ENCODE measurements at regions of chr7 and their contacts with region 1.

Region 1: GRCh38 chr7:47008461-47008860 is 573.5 kb downstream of the TNS3 start:
- DNase-seq: no peak
- ATAC-seq: no peak
- H3K4me3 ChIP-seq: no peak overlapping the region
- H3K27ac ChIP-seq: no peak overlapping the region
- H3K4me1 ChIP-seq: no peaks in the 10 kb centered on the region
- H3K27me3 ChIP-seq: no peaks in the 10 kb centered on the region
- CTCF ChIP-seq: no peak

Region 2: GRCh38 chr7:46955531-46955930 is 52.9 kb before region 1 on chr7:
- intact Hi-C with region 1: loop called in 1 of 10 experiments (anchors 10 kb)
- DNase-seq: no peak
- ATAC-seq: no peak
- H3K4me3 ChIP-seq: no peak overlapping the region
- H3K27ac ChIP-seq: no peak overlapping the region
- H3K4me1 ChIP-seq: peaks cover 0 to 10% (median 0%) of the 10 kb centered on the region in 9 donors
- H3K27me3 ChIP-seq: no peaks in the 10 kb centered on the region
- CTCF ChIP-seq: no peak

Region 3: DNA sequence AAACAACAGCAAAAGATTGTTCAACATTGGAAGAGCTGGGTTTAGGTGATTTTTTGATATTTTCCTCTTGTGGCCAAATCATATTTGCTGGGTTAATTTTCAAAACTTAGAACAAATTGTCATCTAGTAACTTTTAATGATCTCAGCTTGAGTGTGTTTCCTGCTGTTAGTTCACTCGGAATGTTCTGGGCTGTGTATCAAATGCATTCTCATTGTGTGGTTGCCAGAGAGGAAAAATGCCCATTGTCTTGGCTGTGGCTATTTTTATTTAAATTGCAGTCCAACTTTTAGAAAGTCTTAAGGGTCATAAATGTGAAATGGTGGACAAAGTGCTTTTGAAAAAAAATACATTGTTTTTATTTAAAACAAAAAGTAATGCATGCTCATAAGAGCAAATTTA is 31.4 kb after region 1 on chr7:
- intact Hi-C with region 1: no loop called
- DNase-seq: peak in 1 of 2 donors; percentile 69
- ATAC-seq: peak; percentile 74 to 92 (median 87)
- H3K4me3 ChIP-seq: no peak overlapping the region
- H3K27ac ChIP-seq: peak overlapping the region; percentile 45 to 88 (median 78)
- H3K4me1 ChIP-seq: peaks cover 17 to 77% (median 49%) of the 10 kb centered on the region in 9 donors
- H3K27me3 ChIP-seq: no peaks in the 10 kb centered on the region
- CTCF ChIP-seq: no peak

Region 4: DNA sequence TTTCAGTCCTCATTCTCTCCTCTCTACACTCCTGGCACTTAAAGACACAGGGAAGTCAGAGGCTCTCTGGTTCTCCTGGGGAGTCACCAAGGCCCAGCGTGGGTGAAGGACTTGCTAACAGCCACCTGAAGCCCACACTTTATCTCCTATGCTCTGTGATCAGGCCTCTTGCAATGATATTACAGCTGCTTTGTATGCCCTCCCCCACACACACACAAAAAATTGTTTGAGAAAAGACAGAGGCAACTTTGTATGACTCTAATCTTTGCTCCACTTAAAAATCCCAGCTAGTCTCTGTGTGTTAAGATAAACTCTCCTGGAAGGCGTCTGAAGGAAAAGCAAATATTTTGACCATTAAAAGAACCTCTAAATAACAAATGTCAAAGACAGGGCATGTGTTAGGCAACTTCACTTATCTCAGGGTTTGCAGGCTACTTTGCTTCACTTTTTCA is 66.3 kb after region 1 on chr7:
- intact Hi-C with region 1: loop called in 1 of 10 experiments (anchors 10 kb)
- DNase-seq: no peak
- ATAC-seq: peak; percentile 41 to 84 (median 68)
- H3K4me3 ChIP-seq: no peak overlapping the region
- H3K27ac ChIP-seq: peak overlapping the region in 1 of 10 donors; percentile 29
- H3K4me1 ChIP-seq: peaks cover 0 to 31% (median 13%) of the 10 kb centered on the region in 9 donors
- H3K27me3 ChIP-seq: no peaks in the 10 kb centered on the region
- CTCF ChIP-seq: no peak

Measured in heart right ventricle (tissue), 16 donors.